ENCODE measurements at regions of chr10 and their contacts with region 1.

Region 1: DNA sequence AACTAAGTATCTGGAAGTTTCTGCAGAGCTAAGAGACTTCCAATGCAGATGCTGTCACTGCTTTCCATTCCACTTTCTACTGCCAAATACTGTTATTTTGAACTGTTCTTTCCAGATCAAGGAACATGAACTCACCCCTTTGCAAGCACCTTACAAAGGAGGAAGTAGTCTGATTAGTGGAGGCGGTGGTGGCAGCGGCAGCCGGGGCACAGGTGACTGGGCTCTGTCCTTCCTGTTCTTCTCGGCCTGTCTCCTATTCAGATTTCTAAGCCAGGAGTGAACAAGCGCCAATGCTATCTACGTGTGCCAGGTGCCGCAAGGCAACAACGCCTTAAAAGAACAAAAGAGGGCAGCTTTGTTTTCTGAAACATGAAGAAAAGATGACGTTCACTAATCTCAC is 44.9 kb downstream of the BEND7 start:
- DNase-seq: peak; percentile 30
- CTCF ChIP-seq: no peak

Region 2: DNA sequence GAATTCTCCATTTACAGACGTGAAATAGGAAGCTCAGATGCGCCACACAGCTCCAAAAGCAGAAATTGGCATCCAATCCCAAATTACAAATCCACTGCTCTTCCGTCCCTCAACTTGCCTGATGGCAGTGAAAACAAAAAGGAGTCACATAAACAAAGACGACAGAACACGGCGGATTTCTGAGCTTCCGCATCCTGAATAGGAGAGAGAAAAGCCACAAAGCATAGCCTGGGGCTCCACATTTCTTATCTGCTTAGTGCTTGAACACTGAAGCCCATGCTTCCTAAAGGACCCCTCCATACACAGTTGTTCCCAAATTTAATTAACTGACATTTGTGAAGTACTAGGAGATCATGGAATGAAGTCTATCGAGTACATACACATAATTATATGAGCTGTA is 12.2 kb after region 1 on chr10:
- CTCF ChIA-PET with region 1: interaction called, 10 read pairs
- POLR2A ChIA-PET with region 1: no interaction called
- DNase-seq: no peak
- CTCF ChIP-seq: no peak